Upper lobe of right lung (tissue), 1 donor: ENCODE measurements at regions of chr3 and their contacts with region 1.

Region 1: DNA sequence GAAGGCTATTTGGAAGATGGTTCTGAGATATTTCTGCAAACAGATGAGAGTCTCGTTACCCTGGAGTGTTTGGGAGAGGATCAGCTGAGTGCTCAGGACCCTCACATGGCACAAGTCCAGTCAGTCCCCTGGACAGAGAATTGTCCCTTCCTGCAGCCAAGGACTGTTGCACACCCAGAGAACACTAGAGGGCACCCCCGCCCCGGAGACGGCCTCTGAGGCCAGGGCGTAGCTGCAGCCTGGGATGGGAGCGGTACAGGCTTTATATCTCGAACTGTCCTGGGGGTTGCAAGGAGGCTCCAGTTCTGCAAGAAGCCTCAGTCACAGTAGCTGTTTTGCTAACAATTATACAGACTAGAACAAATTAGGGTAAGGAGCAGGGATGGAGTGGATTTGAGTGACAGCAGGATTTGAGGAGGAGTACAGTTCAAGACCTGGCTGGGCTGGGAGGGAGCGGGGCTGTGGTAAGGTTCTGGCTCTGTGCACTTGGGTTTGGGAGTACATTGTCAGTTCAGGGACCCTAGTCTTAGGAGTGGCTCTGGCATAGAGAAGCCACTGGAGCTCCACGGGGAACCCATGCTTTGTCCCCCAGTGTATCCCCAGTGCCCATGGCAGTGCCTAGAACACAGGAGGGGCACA is 67.6 kb upstream of the HACD2 start:
- DNase-seq: peak; percentile 88
- ATAC-seq: peak; percentile 91
- H3K4me3 ChIP-seq: no peak overlapping the region
- H3K27ac ChIP-seq: peak overlapping the region; percentile 78
- H3K4me1 ChIP-seq: peaks cover 49% of the 10 kb centered on the region
- H3K27me3 ChIP-seq: no peaks in the 10 kb centered on the region
- CTCF ChIP-seq: peak; percentile 91

Region 2: GRCh38 chr3:123521179-123521969 is 131.1 kb before region 1 on chr3:
- intact Hi-C with region 1: no loop called
- DNase-seq: no peak
- ATAC-seq: no peak
- H3K4me3 ChIP-seq: no peak overlapping the region
- H3K27ac ChIP-seq: no peak overlapping the region
- H3K4me1 ChIP-seq: peaks cover 7% of the 10 kb centered on the region
- H3K27me3 ChIP-seq: no peaks in the 10 kb centered on the region
- CTCF ChIP-seq: no peak

Region 3: DNA sequence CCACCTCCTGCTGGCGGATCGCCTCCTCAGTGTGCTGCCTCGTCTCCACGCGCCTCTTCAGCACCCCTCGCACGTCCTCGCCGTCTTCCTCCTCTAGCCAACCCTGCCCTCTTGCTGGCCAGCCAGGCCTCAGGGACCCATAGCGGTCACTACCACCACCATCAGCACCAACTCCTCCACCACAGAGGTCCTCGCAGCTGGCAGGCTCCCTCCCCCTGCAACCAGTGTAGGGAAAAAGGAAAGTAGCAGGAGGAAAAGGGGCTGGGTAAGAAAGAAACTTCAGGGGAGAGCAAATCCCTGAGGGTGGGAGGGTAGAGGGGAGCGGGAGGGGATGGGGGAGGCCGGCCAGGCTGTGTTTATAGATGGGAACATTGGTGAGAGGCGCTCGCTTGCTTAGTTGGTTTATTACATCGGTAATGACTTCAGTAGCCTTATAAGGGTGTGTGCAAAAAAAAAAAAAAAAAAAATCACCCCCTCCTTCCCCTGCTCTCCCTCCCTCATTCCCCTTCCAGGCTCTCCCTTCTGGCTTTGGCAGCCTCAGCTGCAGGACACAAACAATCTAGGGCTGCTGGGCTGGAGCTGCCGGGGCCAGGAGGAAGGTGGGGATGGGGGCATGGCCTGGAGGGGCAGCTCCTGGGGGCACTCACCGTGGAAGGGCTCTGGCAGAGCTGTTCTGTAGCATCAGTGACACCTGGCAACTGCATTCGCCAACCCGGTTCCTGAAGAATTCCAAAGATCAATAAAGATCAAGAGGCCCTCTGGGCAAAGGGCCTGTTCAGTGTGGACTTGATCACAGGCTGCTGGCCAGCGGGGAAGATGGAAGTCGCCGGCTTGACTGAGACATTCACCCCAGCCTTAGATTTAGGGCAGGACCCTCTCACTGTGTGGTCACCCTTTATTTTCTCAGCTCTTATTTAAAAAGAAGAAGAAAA is 48.6 kb after region 1 on chr3:
- intact Hi-C with region 1: loop called (anchors 5 kb)
- DNase-seq: no peak
- ATAC-seq: peak; percentile 32
- H3K4me3 ChIP-seq: peak overlapping the region; percentile 46
- H3K27ac ChIP-seq: peak overlapping the region; percentile 53
- H3K4me1 ChIP-seq: peaks cover 23% of the 10 kb centered on the region
- H3K27me3 ChIP-seq: no peaks in the 10 kb centered on the region
- CTCF ChIP-seq: no peak

Region 4: GRCh38 chr3:123719862-123720453 is 67.5 kb after region 1 on chr3:
- intact Hi-C with region 1: loop called (anchors 5 kb)
- DNase-seq: no peak
- ATAC-seq: peak; percentile 9
- H3K4me3 ChIP-seq: no peak overlapping the region
- H3K27ac ChIP-seq: peak overlapping the region; percentile 3
- H3K4me1 ChIP-seq: peaks cover 14% of the 10 kb centered on the region
- H3K27me3 ChIP-seq: no peaks in the 10 kb centered on the region
- CTCF ChIP-seq: no peak